Naive thymus-derived CD4-positive, alpha-beta T cell (primary cell): ENCODE measurements at regions of chrX and their contacts with region 1.

Region 1: GRCh38 chrX:95995583-95995982 is 689.1 kb upstream of the DIAPH2 start:
- DNase-seq: no peak
- ATAC-seq: no peak
- H3K4me3 ChIP-seq: no peak overlapping the region
- H3K4me3 Mint-ChIP-seq: no peak overlapping the region
- H3K27ac ChIP-seq: no peak overlapping the region
- H3K27ac Mint-ChIP-seq: peak overlapping the region in 1 of 9 donors; percentile 50
- H3K4me1 ChIP-seq: no peaks in the 10 kb centered on the region
- H3K4me1 Mint-ChIP-seq: no peaks in the 10 kb centered on the region
- H3K27me3 ChIP-seq: no peaks in the 10 kb centered on the region
- H3K27me3 Mint-ChIP-seq: no peaks in the 10 kb centered on the region

Region 2: DNA sequence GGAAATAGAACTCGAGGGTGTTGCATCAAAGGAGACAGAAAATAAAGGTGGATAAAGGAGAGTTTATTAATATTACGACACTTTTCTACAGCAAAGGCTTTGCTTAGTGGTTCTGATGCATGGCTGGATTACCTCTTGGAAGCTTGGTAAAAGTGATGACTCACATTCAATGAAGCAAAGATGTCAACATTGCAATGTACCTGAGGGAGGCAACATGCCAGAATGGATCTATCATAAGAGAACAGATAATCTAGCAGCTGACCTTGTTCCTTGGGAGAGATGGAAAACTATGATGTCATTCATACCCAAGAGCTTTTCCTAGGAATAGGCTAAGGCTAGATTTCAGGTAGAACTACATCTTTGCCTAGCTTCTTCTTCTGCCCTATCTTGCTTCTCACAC is 46.0 kb before region 1 on chrX:
- CTCF ChIA-PET with region 1: no interaction called
- POLR2A ChIA-PET with region 1: no interaction called
- intact Hi-C with region 1: loop called in 1 of 2 experiments (anchors 5 kb)
- DNase-seq: no peak
- ATAC-seq: no peak
- H3K4me3 ChIP-seq: no peak overlapping the region
- H3K4me3 Mint-ChIP-seq: no peak overlapping the region
- H3K27ac ChIP-seq: no peak overlapping the region
- H3K27ac Mint-ChIP-seq: no peak overlapping the region
- H3K4me1 ChIP-seq: no peaks in the 10 kb centered on the region
- H3K4me1 Mint-ChIP-seq: no peaks in the 10 kb centered on the region
- H3K27me3 ChIP-seq: no peaks in the 10 kb centered on the region
- H3K27me3 Mint-ChIP-seq: no peaks in the 10 kb centered on the region

Region 3: GRCh38 chrX:96052078-96052477 is 56.5 kb after region 1 on chrX:
- CTCF ChIA-PET with region 1: no interaction called
- POLR2A ChIA-PET with region 1: no interaction called
- intact Hi-C with region 1: no loop called
- DNase-seq: no peak
- ATAC-seq: no peak
- H3K4me3 ChIP-seq: no peak overlapping the region
- H3K4me3 Mint-ChIP-seq: no peak overlapping the region
- H3K27ac ChIP-seq: no peak overlapping the region
- H3K27ac Mint-ChIP-seq: no peak overlapping the region
- H3K4me1 ChIP-seq: no peaks in the 10 kb centered on the region
- H3K4me1 Mint-ChIP-seq: no peaks in the 10 kb centered on the region
- H3K27me3 ChIP-seq: no peaks in the 10 kb centered on the region
- H3K27me3 Mint-ChIP-seq: no peaks in the 10 kb centered on the region